B cell (primary cell): ENCODE measurements at regions of chr5 and their contacts with region 1.

Region 1: GRCh38 chr5:170338933-170339779 is 41.6 kb upstream of the LCP2 start:
- DNase-seq: peak; percentile 75
- ATAC-seq: peak; percentile 95
- H3K4me3 ChIP-seq: no peak overlapping the region
- H3K4me3 Mint-ChIP-seq: no peak overlapping the region
- H3K27ac ChIP-seq: no peak overlapping the region
- H3K27ac Mint-ChIP-seq: no peak overlapping the region
- H3K4me1 ChIP-seq: peaks cover 5 to 12% of the 10 kb centered on the region in 2 donors
- H3K4me1 Mint-ChIP-seq: peaks cover 18% of the 10 kb centered on the region
- H3K27me3 ChIP-seq: no peaks in the 10 kb centered on the region
- H3K27me3 Mint-ChIP-seq: peaks cover 9% of the 10 kb centered on the region
- CTCF ChIP-seq: peak; percentile 70

Region 2: DNA sequence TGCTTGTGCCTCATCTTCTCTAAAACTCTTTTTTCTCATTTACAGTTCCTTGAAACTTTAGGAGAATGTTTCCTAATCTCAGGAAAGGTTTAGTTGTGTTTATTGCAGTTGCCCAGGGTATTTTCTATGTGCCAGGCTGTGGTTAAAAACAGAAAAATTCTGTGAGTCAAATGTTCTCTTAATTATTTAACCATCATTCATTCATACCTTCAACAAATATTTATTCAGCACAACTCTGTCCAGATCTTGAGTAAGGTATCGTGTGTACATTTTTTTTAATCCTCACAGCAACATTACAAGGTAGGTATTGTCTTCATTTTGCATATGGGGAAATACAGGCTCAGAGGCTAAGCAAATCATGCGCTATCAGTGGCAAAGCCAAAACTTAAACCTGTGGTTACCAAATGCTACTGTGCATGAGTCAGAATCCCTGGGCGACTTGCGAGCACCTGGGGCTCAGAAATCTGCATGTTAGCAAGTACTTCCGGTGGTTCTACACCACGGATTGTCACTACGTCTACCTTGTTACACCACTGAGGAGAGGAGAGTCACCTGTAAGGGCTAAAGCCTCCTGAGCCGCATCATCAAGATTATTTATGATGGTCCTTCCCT is 85.2 kb before region 1 on chr5:
- CTCF ChIA-PET with region 1: interaction called, 11 read pairs
- POLR2A ChIA-PET with region 1: no interaction called
- intact Hi-C with region 1: no loop called
- DNase-seq: peak; percentile 50
- ATAC-seq: peak; percentile 89
- H3K4me3 ChIP-seq: no peak overlapping the region
- H3K4me3 Mint-ChIP-seq: no peak overlapping the region
- H3K27ac ChIP-seq: no peak overlapping the region
- H3K27ac Mint-ChIP-seq: no peak overlapping the region
- H3K4me1 ChIP-seq: peaks cover 0 to 4% of the 10 kb centered on the region in 2 donors
- H3K4me1 Mint-ChIP-seq: peaks cover 13% of the 10 kb centered on the region
- H3K27me3 ChIP-seq: no peaks in the 10 kb centered on the region
- H3K27me3 Mint-ChIP-seq: no peaks in the 10 kb centered on the region
- CTCF ChIP-seq: no peak

Region 3: GRCh38 chr5:170278611-170279452 is 60.3 kb before region 1 on chr5:
- CTCF ChIA-PET with region 1: interaction called, 127 read pairs
- POLR2A ChIA-PET with region 1: interaction called, 5 read pairs
- intact Hi-C with region 1: no loop called
- DNase-seq: peak; percentile 73
- ATAC-seq: peak; percentile 87
- H3K4me3 ChIP-seq: peak overlapping the region in 2 of 5 experiments; percentile 5 to 35
- H3K4me3 Mint-ChIP-seq: peak overlapping the region; percentile 61
- H3K27ac ChIP-seq: peak overlapping the region; percentile 15 to 49
- H3K27ac Mint-ChIP-seq: peak overlapping the region; percentile 90
- H3K4me1 ChIP-seq: peaks cover 41 to 46% of the 10 kb centered on the region in 2 donors
- H3K4me1 Mint-ChIP-seq: peaks cover 46% of the 10 kb centered on the region
- H3K27me3 ChIP-seq: no peaks in the 10 kb centered on the region
- H3K27me3 Mint-ChIP-seq: no peaks in the 10 kb centered on the region
- CTCF ChIP-seq: no peak

Region 4: DNA sequence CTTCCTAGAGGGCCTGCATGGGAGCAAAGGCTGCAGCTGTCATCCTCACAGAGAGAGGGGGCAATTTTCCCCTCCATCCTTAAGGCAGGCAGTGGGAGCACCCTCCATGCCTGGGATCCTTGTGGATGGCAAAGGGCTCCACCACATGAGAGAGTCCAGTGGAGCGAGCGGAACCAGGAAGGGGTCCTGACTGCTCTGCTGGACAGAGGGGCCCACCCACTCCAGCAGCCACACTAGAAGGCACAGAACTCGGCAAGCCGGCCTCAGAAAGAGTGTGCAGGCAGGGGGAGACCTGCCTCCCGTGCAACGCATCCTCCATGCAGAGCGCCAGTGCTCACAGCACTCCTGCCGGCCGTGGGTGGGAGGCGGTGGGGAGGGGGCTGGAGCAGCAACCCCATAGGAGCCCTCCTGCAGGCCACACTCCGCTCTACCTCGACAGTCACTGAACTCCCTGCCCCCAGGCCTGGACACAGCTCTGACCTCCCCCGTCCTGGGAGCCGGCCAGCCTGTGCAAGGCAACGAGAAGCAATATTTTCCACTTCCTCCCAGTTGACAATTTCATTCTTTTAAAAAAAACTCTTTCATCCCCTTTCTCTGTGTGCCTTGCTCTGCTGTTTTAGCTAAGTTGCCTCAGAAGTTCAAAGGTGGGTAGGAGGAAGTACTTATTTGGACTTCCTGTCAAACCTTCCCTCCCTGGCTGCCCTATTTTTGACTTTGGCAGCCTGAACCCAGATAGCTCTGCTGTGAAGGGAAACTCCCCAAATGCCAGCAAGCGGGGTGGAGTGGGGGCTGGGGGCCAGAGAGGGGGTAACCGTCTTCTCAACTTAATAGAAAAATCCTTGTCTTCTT is 36.3 kb before region 1 on chr5:
- CTCF ChIA-PET with region 1: interaction called, 67 read pairs
- POLR2A ChIA-PET with region 1: interaction called, 4 read pairs
- intact Hi-C with region 1: no loop called
- DNase-seq: peak; percentile 72
- ATAC-seq: peak; percentile 63
- H3K4me3 ChIP-seq: peak overlapping the region in 1 of 5 experiments; percentile 19
- H3K4me3 Mint-ChIP-seq: peak overlapping the region; percentile 56
- H3K27ac ChIP-seq: no peak overlapping the region
- H3K27ac Mint-ChIP-seq: peak overlapping the region; percentile 53
- H3K4me1 ChIP-seq: peaks cover 23 to 29% of the 10 kb centered on the region in 2 donors
- H3K4me1 Mint-ChIP-seq: peaks cover 39% of the 10 kb centered on the region
- H3K27me3 ChIP-seq: peaks cover 0 to 7% (median 0%) of the 10 kb centered on the region in 4 experiments
- H3K27me3 Mint-ChIP-seq: peaks cover 8% of the 10 kb centered on the region
- CTCF ChIP-seq: no peak

Region 5: GRCh38 chr5:170420780-170421412 is 81.7 kb after region 1 on chr5:
- CTCF ChIA-PET with region 1: interaction called, 6 read pairs
- POLR2A ChIA-PET with region 1: no interaction called
- intact Hi-C with region 1: loop called (anchors 1 kb)
- DNase-seq: peak; percentile 74
- ATAC-seq: peak; percentile 41
- H3K4me3 ChIP-seq: no peak overlapping the region
- H3K4me3 Mint-ChIP-seq: no peak overlapping the region
- H3K27ac ChIP-seq: no peak overlapping the region
- H3K27ac Mint-ChIP-seq: no peak overlapping the region
- H3K4me1 ChIP-seq: no peaks in the 10 kb centered on the region
- H3K4me1 Mint-ChIP-seq: no peaks in the 10 kb centered on the region
- H3K27me3 ChIP-seq: peaks cover 0 to 16% (median 6%) of the 10 kb centered on the region in 4 experiments
- H3K27me3 Mint-ChIP-seq: peaks cover 34% of the 10 kb centered on the region
- CTCF ChIP-seq: peak; percentile 78